ENCODE measurements at regions of chr4 and their contacts with region 1.

Region 1: GRCh38 chr4:65546882-65547416 is 123.3 kb downstream of the EPHA5 start:
- DNase-seq: no peak
- ATAC-seq: no peak
- H3K4me3 ChIP-seq: no peak overlapping the region
- H3K27ac ChIP-seq: no peak overlapping the region
- H3K4me1 ChIP-seq: no peaks in the 10 kb centered on the region
- H3K27me3 ChIP-seq: no peaks in the 10 kb centered on the region
- CTCF ChIP-seq: no peak
- POLR2A ChIP-seq: no peak

Region 2: GRCh38 chr4:64718091-64718490 is 828.9 kb before region 1 on chr4:
- intact Hi-C with region 1: no loop called
- DNase-seq: no peak
- ATAC-seq: no peak
- H3K4me3 ChIP-seq: no peak overlapping the region
- H3K27ac ChIP-seq: no peak overlapping the region
- H3K4me1 ChIP-seq: no peaks in the 10 kb centered on the region
- H3K27me3 ChIP-seq: no peaks in the 10 kb centered on the region
- CTCF ChIP-seq: no peak
- POLR2A ChIP-seq: no peak

Region 3: DNA sequence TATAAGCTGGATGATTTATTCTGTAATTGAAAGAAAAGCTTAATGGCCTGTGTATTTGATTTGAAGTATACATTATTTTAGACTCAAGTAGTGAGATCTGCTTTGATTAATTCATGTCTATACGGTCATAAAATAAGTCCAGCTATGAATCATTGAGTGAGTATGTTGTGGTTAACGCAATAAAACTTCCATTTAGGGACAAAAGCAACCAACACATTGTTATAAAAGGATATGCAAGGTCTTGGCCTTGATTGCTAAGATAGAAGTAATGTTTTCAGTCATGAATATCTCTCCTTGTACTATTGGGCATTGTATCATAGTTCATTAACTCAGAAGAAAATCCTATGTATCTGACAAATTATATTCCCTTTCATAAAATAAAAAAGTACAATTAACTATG is 38.8 kb before region 1 on chr4:
- intact Hi-C with region 1: loop called in 1 of 10 experiments (anchors 2 kb)
- DNase-seq: no peak
- ATAC-seq: no peak
- H3K4me3 ChIP-seq: no peak overlapping the region
- H3K27ac ChIP-seq: no peak overlapping the region
- H3K4me1 ChIP-seq: no peaks in the 10 kb centered on the region
- H3K27me3 ChIP-seq: no peaks in the 10 kb centered on the region
- CTCF ChIP-seq: no peak
- POLR2A ChIP-seq: no peak